ENCODE measurements at regions of chr5 and their contacts with region 1.

Region 1: DNA sequence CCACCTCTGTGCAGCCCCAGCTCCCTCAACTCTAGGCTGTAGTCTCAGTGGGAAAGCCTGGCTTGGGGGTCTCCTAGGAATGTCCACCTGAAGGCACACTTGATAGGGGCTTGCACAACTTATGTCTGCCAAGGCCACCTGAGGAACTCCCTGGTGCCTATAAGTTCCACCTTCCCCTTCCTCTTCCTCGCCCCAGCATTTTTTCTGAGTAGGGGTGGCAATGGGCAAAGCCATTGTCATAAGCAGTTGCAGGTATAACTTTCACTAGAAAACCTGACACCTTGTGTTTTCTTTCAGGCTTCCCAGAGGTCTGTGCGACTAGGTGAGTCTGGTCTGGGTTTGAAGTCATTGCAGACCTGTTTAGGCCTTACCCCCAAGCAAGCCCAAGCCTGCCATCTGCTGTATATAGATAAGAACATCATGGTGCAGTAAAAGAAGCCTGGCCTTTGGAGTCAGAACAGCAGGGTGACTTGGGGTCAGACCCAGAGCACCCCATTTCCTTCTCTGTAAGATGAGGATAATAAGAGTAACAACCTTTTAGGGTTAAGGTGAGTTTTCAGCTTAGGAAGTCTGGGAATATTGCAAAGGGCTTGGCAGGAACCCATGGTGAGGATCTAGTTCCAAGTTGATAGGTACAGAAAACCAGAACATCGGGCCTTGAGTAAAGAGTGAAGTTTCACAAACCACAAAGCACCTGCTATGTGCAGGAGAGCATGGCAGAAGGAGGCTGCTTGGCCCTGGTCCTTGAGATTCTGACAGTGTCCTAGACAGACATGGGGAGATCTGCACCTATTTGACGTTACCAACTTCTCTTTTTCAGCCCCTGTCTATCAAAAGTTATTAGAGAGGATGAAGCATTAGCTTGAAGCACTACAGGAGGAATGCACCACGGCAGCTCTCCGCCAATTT is 33.8 kb downstream of the TGFBI start:
- DNase-seq: peak; percentile 34
- ATAC-seq: peak; percentile 81
- H3K4me3 Mint-ChIP-seq: no peak overlapping the region
- H3K27ac Mint-ChIP-seq: no peak overlapping the region
- H3K4me1 Mint-ChIP-seq: peaks cover 10% of the 10 kb centered on the region
- H3K27me3 Mint-ChIP-seq: no peaks in the 10 kb centered on the region
- CTCF ChIP-seq: peak; percentile 17; the same call in 1 of the 2 replicates

Region 2: GRCh38 chr5:135887351-135887864 is 175.2 kb before region 1 on chr5:
- CTCF ChIA-PET with region 1: interaction called, 33 read pairs
- POLR2A ChIA-PET with region 1: no interaction called
- DNase-seq: peak; percentile 76
- ATAC-seq: peak; percentile 71
- H3K4me3 Mint-ChIP-seq: peak overlapping the region; percentile 58
- H3K27ac Mint-ChIP-seq: no peak overlapping the region
- H3K4me1 Mint-ChIP-seq: peaks cover 20% of the 10 kb centered on the region
- H3K27me3 Mint-ChIP-seq: peaks cover 26% of the 10 kb centered on the region
- CTCF ChIP-seq: peak; percentile 78

Region 3: DNA sequence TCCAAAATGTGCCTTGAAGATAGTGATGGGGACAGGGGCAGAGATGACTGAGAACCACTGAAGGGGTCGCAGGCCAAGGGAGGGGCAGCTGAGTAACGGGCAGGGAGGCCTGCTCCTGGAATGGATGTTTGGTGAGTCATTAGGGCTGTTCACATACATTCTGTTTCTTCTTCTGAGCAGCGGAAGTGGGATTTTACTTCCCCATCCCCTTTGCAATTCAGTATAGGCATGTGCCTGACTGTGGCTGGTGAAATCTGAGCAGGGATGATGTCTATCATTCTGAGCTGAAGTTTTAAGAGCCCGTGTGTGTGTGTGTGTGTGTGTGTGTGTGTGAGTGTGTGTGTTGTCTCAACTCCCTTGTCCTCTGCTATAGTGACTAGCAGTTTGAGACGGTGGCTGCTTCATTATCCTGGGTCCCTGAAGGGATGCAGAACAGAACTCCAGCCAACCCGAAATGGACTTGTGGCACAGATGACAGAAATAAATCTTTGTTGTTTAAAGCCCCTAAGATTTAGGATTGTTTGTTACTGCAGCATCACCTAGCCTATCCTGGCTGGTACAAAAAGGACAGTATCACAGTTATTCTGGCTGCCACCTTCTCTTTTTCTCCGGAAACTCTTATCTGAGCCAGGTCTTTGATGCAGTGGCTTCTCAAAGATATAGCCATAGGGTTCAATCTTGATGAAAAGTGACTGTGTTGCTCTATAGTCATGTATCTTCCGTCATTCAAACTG is 63.0 kb before region 1 on chr5:
- CTCF ChIA-PET with region 1: interaction called, 15 read pairs
- POLR2A ChIA-PET with region 1: no interaction called
- DNase-seq: no peak
- ATAC-seq: no peak
- H3K4me3 Mint-ChIP-seq: no peak overlapping the region
- H3K27ac Mint-ChIP-seq: no peak overlapping the region
- H3K4me1 Mint-ChIP-seq: no peaks in the 10 kb centered on the region
- H3K27me3 Mint-ChIP-seq: no peaks in the 10 kb centered on the region; the same call in 1 of the 2 replicates
- CTCF ChIP-seq: no peak

Region 4: GRCh38 chr5:136042665-136043121 is 19.9 kb before region 1 on chr5:
- CTCF ChIA-PET with region 1: interaction called, 12 read pairs
- POLR2A ChIA-PET with region 1: no interaction called
- DNase-seq: no peak
- ATAC-seq: peak; percentile 60
- H3K4me3 Mint-ChIP-seq: no peak overlapping the region
- H3K27ac Mint-ChIP-seq: no peak overlapping the region
- H3K4me1 Mint-ChIP-seq: peaks cover 18% of the 10 kb centered on the region
- H3K27me3 Mint-ChIP-seq: peaks cover 27% of the 10 kb centered on the region
- CTCF ChIP-seq: no peak